Right ventricle myocardium superior (tissue), 1 donor: ENCODE measurements at regions of chr5 and their contacts with region 1.

Region 1: GRCh38 chr5:135887351-135887864 is 8.2 kb downstream of the IL9 start:
- DNase-seq: no peak
- ATAC-seq: peak; percentile 88

Region 2: DNA sequence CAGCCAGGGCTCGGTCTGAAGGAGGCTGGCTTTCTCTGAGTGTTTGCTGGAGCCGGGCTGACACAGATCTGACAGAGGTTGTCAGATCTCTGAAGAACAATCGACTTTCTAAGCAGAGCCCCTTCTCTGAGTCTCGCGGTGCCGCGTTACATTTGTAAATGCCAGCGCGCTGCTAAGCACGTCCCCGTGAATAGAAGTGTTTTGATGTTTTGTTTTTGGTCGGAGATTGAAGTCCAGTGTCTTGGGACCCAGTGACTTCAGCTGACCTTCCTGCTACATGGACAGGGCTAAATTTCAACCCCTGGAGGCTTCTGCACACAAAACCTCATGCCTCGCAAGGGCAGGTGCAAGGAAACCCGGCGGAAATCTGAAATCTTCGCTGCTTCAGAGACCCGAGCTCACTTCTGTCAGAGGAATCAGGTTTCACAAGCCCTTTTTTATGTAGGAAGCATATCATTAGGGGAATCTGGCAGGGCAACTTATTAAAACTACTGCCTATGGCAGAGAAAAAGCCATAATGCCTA is 378.9 kb before region 1 on chr5:
- intact Hi-C with region 1: no loop called
- DNase-seq: no peak
- ATAC-seq: no peak

Region 3: GRCh38 chr5:136080483-136081216 is 193.2 kb after region 1 on chr5:
- intact Hi-C with region 1: loop called (anchors 2 kb)
- DNase-seq: peak; percentile 95
- ATAC-seq: peak; percentile 94

Region 4: GRCh38 chr5:136212252-136212721 is 324.9 kb after region 1 on chr5:
- intact Hi-C with region 1: loop called (anchors 2 kb)
- DNase-seq: peak; percentile 64
- ATAC-seq: peak; percentile 67